Aorta (tissue), 5 donors: ENCODE measurements at regions of chr11 and their contacts with region 1.

Region 1: DNA sequence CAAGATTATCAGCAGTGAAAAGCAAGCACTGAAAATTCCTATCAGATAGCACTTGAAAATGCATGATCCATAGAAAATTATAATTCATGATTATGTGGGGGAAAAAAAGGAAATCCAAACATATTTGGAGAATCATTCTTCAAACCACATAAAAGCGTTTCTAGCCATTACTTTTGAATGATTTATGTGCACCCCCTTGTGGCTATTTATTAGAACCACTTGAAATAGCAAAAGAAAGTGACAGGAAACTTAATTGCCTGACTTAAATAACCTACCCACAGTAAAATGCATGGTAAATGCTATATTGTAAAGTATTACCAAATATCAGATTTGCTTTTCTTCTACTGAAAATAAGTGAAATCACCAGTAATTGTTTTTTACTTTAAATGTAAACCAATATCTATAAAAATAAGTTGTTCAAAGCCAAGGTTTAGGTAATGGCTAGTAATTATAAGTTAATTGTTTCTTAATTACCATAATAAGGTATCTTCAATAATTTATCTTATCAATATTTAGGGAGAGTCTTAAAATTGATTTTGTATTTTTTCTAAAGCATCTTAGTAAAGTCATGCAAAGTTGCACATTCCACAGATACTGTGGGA is 168.5 kb downstream of the ARHGAP42 start:
- DNase-seq: no peak
- ATAC-seq: no peak
- H3K4me3 ChIP-seq: no peak overlapping the region
- H3K27ac ChIP-seq: no peak overlapping the region
- H3K4me1 ChIP-seq: no peaks in the 10 kb centered on the region
- H3K27me3 ChIP-seq: no peaks in the 10 kb centered on the region

Region 2: DNA sequence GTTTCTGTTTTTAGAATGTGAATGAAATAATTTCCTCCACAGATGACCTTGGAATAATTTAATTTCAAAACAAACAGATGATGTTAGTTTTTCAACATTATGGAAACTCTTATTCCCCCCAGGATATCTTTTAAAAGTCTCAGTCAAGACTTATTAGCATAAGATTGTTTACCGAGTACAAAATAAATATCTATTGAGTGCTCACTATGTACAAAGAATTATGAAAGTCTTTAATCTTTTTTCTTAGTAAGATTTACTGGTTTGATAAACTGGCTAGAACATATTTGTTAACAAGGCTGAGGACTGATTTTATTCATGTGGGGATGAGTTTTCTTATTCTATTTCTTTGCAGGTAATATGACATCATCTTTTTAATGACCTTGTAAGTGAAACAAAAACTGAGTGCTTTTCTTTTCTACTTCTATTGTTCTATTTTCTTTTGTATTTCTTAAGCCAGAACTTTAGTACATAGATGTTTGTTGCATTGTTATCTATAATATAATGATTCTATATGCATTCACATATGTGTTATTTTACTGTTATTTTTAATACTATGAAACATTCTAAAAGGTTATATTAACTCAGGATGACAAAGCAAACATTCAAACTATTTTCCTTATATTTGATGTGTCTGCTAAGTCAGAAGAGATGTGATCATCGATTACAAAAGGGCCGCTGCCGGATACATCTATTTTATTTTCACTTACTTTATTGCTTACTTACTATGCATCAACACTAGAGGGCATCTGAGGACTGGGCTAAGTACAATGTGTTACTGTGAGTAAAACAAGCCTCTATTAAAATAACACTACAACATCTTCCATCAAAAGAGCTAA is 279.5 kb before region 1 on chr11:
- intact Hi-C with region 1: loop called (anchors 2 to 5 kb)
- DNase-seq: no peak
- ATAC-seq: peak; percentile 87
- H3K4me3 ChIP-seq: no peak overlapping the region
- H3K27ac ChIP-seq: no peak overlapping the region
- H3K4me1 ChIP-seq: no peaks in the 10 kb centered on the region
- H3K27me3 ChIP-seq: no peaks in the 10 kb centered on the region

Region 3: GRCh38 chr11:100681064-100681502 is 174.5 kb before region 1 on chr11:
- intact Hi-C with region 1: loop called (anchors 2 kb)
- DNase-seq: peak in 1 of 2 donors; percentile 77
- ATAC-seq: no peak
- H3K4me3 ChIP-seq: no peak overlapping the region
- H3K27ac ChIP-seq: no peak overlapping the region
- H3K4me1 ChIP-seq: no peaks in the 10 kb centered on the region
- H3K27me3 ChIP-seq: no peaks in the 10 kb centered on the region

Region 4: GRCh38 chr11:100810146-100810545 is 45.4 kb before region 1 on chr11:
- intact Hi-C with region 1: no loop called
- DNase-seq: no peak
- ATAC-seq: no peak
- H3K4me3 ChIP-seq: no peak overlapping the region
- H3K27ac ChIP-seq: no peak overlapping the region
- H3K4me1 ChIP-seq: no peaks in the 10 kb centered on the region
- H3K27me3 ChIP-seq: no peaks in the 10 kb centered on the region

Region 5: DNA sequence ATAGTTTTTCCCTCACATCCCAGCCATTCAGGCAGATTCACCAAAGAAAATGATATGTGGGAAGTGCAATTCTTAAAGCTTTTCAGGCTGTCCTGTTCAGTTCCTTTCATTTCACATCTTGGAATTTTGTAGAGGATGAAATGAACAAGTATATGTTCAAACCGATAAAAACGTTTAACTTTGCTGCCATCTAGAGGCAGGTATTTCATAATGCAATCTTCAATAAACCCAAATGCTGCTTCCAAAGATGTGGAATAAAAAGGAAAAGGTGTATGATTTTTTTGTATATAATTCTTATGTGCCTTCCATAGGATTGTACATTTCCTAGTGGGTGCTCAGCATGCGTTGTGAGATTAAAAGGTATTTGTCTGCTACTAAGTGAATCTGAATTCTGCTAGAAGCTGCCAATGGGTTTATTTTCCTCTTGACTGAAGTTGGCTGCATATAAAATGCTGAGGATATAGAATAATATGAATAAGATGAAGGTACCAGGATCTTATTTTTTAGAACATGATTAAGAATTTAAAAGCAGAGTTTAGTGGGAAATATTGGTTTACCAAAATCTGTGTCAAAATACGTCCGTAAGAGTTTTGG is 74.7 kb after region 1 on chr11:
- intact Hi-C with region 1: loop called in 1 of 2 experiments (anchors 5 kb)
- DNase-seq: no peak
- ATAC-seq: peak; percentile 77
- H3K4me3 ChIP-seq: no peak overlapping the region
- H3K27ac ChIP-seq: no peak overlapping the region
- H3K4me1 ChIP-seq: no peaks in the 10 kb centered on the region
- H3K27me3 ChIP-seq: no peaks in the 10 kb centered on the region